GM23248 (cell line): ENCODE measurements at regions of chr16 and their contacts with region 1.

Region 1: GRCh38 chr16:48687421-48688038 is 77.5 kb upstream of the N4BP1 start:
- DNase-seq: peak; percentile 83
- H3K4me3 ChIP-seq: no peak overlapping the region
- H3K27ac ChIP-seq: no peak overlapping the region
- H3K4me1 ChIP-seq: no peaks in the 10 kb centered on the region
- H3K27me3 ChIP-seq: no peaks in the 10 kb centered on the region

Region 2: DNA sequence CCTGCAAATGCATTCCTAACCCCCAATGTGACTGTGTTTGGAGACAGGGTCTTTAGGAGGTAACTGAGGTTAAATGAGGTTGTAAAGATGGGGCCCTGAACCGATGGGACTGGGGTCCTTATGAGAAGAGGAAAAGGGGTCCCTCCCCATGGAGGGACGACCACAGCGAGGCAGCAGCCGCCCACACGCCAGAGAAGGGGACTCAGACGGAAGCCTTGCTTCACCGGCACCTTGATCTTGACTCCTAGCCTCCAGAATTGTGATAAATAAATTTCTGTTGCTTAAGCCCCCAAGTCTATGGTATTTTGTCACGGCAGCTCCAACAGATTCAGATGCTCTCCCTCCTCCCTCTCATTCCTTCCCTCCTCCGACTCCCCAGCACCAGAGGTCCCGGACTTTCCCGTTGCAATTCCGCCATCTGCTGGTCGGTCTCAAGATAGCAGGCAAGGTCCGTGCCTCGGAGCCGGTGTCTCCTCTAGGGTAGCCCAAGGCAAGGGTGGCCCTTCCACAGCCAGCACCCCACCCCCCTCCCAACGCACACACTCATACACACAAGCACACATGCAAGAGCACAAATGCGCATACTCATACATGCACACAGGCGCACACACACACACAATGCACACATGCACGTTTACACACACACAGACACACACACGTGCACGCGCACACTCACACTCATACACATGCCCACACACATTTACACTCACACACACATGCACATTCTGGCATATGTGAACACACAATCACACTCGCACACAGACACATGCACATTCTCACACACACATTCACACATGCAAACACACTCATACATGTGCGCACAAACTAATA is 663.0 kb after region 1 on chr16:
- in situ Hi-C with region 1: loop called (anchors 5 kb)
- DNase-seq: peak; percentile 59
- H3K4me3 ChIP-seq: no peak overlapping the region
- H3K27ac ChIP-seq: no peak overlapping the region
- H3K4me1 ChIP-seq: no peaks in the 10 kb centered on the region
- H3K27me3 ChIP-seq: no peaks in the 10 kb centered on the region